BJ (cell line): ENCODE measurements at regions of chr7 and their contacts with region 1.

Region 1: GRCh38 chr7:774161-775109 is 47.4 kb upstream of the PRKAR1B start:
- DNase-seq: no peak
- H3K4me3 ChIP-seq: no peak overlapping the region
- H3K27me3 ChIP-seq: no peaks in the 10 kb centered on the region
- CTCF ChIP-seq: peak; percentile 86

Region 2: DNA sequence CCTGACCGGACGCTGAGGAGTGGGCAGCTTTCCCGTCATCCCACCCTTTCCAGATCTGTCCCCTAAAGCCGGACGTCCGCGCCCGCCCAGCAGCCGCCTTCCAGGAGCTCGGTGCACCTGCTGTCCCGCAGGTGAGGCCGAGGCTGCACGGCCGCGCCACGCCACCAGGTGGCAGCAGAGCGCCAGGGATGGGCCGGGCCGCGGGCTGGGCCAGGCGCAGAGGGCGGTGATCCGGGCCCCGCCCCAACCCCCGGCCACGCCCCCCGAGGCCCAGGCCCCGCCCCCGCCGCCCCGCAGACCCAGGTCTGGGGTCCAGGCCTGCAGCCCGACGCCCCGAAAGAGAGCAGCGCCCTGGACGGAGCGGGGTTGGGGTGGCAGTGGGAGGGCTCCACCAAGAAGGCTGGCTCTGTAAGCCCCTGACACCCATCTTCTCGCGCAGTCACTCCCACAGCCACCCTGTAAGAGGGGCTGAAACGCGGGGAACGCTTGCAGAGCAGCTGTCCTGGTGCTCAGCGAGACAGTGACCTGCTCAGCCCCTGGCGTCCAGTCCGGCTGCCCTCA is 452.2 kb before region 1 on chr7:
- CTCF ChIA-PET with region 1: interaction called, 47 read pairs
- POLR2A ChIA-PET with region 1: no interaction called
- DNase-seq: no peak
- H3K4me3 ChIP-seq: no peak overlapping the region
- H3K27me3 ChIP-seq: peaks cover 17% of the 10 kb centered on the region
- CTCF ChIP-seq: peak; percentile 69

Region 3: GRCh38 chr7:332646-333392 is 441.6 kb before region 1 on chr7:
- CTCF ChIA-PET with region 1: interaction called, 11 read pairs
- POLR2A ChIA-PET with region 1: no interaction called
- DNase-seq: no peak
- H3K4me3 ChIP-seq: peak overlapping the region; percentile 23
- H3K27me3 ChIP-seq: 0 out of 2 replicates have a peak, but pooled peaks cover 2% of the 10 kb centered on the region
- CTCF ChIP-seq: peak; percentile 78

Region 4: GRCh38 chr7:762885-763284 is 11.6 kb before region 1 on chr7:
- CTCF ChIA-PET with region 1: interaction called, 12 read pairs
- POLR2A ChIA-PET with region 1: interaction called, 8 read pairs
- DNase-seq: no peak
- H3K4me3 ChIP-seq: no peak overlapping the region
- H3K27me3 ChIP-seq: no peaks in the 10 kb centered on the region
- CTCF ChIP-seq: no peak

Region 5: GRCh38 chr7:794671-795329 is 20.4 kb after region 1 on chr7:
- CTCF ChIA-PET with region 1: no interaction called
- POLR2A ChIA-PET with region 1: no interaction called
- DNase-seq: no peak
- H3K4me3 ChIP-seq: no peak overlapping the region
- H3K27me3 ChIP-seq: no peaks in the 10 kb centered on the region
- CTCF ChIP-seq: no peak